Right lobe of liver (tissue), 6 donors: ENCODE measurements at regions of chr10 and their contacts with region 1.

Region 1: GRCh38 chr10:52740913-52741675 is 31.5 kb downstream of the MBL2 start:
- DNase-seq: peak in 2 of 3 donors; percentile 41 to 62
- ATAC-seq: peak; percentile 88 to 94 (median 92)
- H3K4me3 ChIP-seq: no peak overlapping the region
- H3K27ac ChIP-seq: no peak overlapping the region
- H3K4me1 ChIP-seq: peaks cover 0 to 4% (median 0%) of the 10 kb centered on the region in 4 donors
- H3K27me3 ChIP-seq: no peaks in the 10 kb centered on the region
- CTCF ChIP-seq: peak; percentile 96 to 98 (median 96)
- POLR2A ChIP-seq: no peak

Region 2: DNA sequence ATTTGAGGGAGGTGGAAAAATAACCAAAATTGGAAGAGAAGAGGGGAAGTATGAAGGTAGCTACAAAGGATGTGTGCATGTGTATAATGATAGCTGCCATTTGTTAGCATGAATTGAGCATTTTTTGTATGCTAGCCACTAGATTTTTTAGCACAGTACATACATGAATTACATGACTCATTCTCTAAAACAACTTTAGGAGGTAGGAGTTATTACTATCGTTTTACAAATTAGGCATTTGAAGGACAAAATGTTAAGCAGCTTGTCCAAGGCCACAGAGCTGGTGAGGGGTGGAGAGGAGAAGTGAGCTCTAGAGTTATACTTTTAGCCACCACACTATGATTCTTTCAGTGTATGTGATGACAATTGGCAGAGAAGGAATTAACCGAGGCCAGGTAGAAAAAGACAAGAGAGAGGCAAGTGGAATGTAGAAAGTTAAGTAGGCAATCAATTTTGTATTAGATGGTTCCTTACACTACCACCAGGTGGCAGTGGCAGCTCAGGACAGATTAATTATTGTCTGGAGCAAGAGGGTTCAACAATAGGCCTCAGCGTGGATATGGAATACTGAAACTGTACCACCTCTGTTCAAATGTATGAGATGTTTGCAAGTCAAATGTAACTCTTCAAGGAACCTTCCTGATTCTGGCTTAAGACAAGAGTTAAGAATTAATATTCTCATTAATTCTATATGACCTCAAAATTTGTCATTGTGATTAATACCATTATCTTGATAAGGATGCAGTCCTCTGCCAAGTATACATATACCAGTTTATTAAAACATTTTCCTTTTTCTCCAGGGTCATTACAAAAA is 96.5 kb before region 1 on chr10:
- intact Hi-C with region 1: no loop called
- DNase-seq: peak in 2 of 3 donors; percentile 24 to 52
- ATAC-seq: peak; percentile 86 to 93 (median 88)
- H3K4me3 ChIP-seq: no peak overlapping the region
- H3K27ac ChIP-seq: no peak overlapping the region
- H3K4me1 ChIP-seq: no peaks in the 10 kb centered on the region
- H3K27me3 ChIP-seq: no peaks in the 10 kb centered on the region
- CTCF ChIP-seq: peak; percentile 72 to 85 (median 81)
- POLR2A ChIP-seq: no peak

Region 3: DNA sequence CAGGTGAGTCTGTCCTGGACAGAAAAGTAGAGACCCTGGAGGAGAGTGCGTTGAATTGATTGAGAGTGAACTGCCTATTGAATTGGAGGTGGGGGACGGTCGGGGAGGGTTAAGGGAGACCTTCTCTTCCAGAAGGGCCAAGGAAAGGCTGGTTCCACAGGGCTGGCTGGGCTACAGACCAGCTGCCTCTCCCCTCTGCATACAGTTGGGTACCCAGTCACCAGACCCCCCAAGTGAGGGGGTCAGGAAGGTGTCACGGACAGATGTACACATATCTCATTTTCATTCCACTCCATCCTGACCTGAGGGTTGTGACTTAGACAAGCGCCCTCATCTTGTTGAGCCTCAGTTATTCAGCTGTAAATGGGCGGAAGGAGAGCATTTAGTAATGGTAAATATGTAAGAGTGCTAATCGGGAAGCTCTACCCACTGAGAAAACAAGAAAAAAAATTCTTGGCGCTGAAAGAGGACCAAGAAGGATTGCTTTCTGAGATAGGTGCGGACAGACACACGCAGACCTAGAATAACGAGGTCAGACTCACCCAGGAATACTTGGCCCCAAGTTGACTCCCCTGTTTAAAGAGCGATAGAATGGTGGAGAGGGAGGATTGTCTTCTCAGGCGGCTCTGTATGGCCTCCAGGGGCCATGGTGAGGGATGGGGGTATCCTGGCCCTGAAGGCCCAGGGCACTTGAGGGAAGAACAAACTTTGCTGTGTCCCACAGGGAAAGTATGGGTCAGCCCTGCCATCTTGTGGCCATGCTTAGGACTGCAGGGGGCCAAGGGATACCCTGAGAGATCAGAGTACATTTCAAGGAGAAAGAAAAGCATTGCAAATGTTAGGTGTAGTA is 38.7 kb after region 1 on chr10:
- intact Hi-C with region 1: loop called (anchors 2 to 5 kb)
- DNase-seq: peak; percentile 74 to 82 (median 75)
- ATAC-seq: peak; percentile 84 to 89 (median 88)
- H3K4me3 ChIP-seq: no peak overlapping the region
- H3K27ac ChIP-seq: no peak overlapping the region
- H3K4me1 ChIP-seq: peaks cover 0 to 22% (median 8%) of the 10 kb centered on the region in 4 donors
- H3K27me3 ChIP-seq: no peaks in the 10 kb centered on the region
- CTCF ChIP-seq: peak; percentile 96 to 98 (median 98)
- POLR2A ChIP-seq: no peak

Region 4: DNA sequence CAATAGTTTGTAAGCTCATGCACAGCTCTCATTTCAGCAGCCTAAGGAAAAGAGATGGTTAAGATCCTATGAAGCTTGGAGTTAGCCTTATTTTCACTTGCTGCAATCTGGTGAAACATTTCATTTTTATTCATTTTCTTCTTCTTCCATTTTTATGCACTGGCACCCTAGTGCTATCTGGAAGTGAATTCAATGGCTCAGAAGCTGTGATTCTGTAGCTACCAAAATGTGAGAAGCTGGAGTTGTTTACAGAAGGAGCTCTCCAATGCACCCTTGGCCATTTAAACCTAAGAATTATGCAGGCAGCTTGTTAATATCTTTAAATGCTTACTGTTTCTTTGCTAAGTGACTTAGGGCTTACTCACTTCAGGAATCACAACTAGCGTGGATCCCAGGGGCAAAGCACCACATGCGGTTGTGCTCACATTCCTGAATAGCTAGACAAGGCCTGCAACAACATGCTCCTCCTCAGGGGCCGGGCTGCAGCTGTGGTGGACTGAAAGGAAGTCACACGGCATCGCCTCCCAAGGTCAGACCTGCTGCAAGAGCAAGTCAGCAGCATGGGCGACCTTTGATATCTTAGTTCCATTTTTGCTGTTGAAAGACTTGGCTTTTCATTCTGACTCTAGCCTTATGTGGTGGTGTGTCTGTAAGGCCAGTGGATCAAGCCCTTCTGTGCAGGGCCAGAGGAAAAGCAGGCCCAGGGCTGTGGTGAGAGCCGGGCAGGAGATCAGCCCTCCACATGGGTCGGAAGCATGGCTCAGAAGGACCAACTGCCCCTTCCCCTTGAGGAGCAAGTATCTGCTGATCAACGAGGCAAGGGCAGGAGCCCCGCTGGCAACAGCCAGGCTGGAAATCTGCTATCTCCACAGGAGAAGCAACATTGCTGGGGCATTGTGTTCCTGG is 123.4 kb after region 1 on chr10:
- intact Hi-C with region 1: no loop called
- DNase-seq: peak in 1 of 3 donors; percentile 19
- ATAC-seq: peak in 3 of 4 donors; percentile 21 to 35 (median 28)
- H3K4me3 ChIP-seq: no peak overlapping the region
- H3K27ac ChIP-seq: no peak overlapping the region
- H3K4me1 ChIP-seq: no peaks in the 10 kb centered on the region
- H3K27me3 ChIP-seq: no peaks in the 10 kb centered on the region
- CTCF ChIP-seq: no peak
- POLR2A ChIP-seq: no peak